ENCODE measurements at regions of chr14 and their contacts with region 1.

Region 1: GRCh38 chr14:50943943-50944646 is at the start of gene PYGL:
- DNase-seq: no peak
- H3K4me3 ChIP-seq: peak within 1 kb of the TSS; percentile 79 to 92
- H3K27ac ChIP-seq: peak within 1 kb of the TSS; percentile 90
- H3K4me1 ChIP-seq: peaks cover 14% of the 10 kb centered on the region
- H3K27me3 ChIP-seq: no peaks in the 10 kb centered on the region
- CTCF ChIP-seq: no peak
- POLR2A ChIP-seq: peak in 1 of 2 donors; percentile 50
- total RNA-seq, gene PYGL: 84.0 TPM

Region 2: DNA sequence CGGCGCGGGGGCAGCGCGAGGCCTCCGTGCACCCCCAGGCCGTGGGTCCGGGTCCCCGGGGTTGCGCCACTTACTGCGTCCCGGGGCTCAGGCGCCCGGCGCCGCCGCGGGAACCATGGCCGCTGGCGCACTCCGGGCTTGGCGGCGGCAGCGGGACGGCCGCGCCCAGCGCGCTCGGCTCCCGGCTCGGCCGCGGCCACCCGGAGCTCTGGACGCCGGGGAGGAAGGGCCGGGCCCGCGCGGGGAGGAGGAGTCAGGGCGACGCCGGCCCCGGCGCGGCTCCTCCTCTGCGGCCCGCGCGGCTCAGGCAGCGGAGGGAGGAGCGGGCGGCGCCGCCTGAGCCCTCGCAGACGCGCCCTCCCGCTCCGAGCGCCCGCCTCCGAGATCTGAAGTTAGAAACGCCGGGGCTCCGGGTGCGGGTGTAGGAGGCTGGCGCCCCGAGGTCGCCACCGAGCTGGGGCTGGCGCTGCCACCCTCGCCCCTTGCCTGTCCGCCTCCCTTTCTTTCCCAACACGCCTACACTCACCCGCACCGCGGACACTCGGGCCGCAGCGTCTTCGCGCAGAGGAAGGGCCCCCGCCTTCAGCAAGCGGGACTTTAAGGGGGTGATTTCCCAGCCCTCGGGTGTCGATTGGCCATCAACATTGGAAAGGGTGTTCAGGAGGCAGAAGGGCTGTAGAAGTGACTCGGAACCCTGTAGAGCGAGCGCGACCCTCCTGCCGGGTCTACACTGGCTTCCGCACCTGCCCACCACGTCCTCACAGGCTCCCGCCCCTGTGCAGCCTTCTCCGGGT is 113.0 kb before region 1 on chr14 and contains the start of gene NIN:
- intact Hi-C with region 1: no loop called
- DNase-seq: no peak
- H3K4me3 ChIP-seq: peak within 1 kb of the TSS; percentile 57 to 99
- H3K27ac ChIP-seq: peak within 1 kb of the TSS; percentile 90
- H3K4me1 ChIP-seq: peaks cover 30% of the 10 kb centered on the region
- H3K27me3 ChIP-seq: no peaks in the 10 kb centered on the region
- CTCF ChIP-seq: no peak
- POLR2A ChIP-seq: no peak
- total RNA-seq, gene NIN: 29.5 TPM

Region 3: GRCh38 chr14:51239813-51240803 is 296.0 kb after region 1 on chr14 and contains the start of gene TMX1:
- intact Hi-C with region 1: loop called (anchors 10 kb)
- DNase-seq: peak; percentile 98
- H3K4me3 ChIP-seq: peak within 1 kb of the TSS; percentile 88 to 92
- H3K27ac ChIP-seq: peak within 1 kb of the TSS; percentile 78
- H3K4me1 ChIP-seq: peaks cover 19% of the 10 kb centered on the region
- H3K27me3 ChIP-seq: no peaks in the 10 kb centered on the region
- CTCF ChIP-seq: no peak
- POLR2A ChIP-seq: peak in 1 of 2 donors; percentile 66
- total RNA-seq, gene TMX1: 17.4 TPM

Measured in vagina (tissue), 2 donors.